AG04449 (cell line): ENCODE measurements at regions of chr10 and their contacts with region 1.

Region 1: GRCh38 chr10:21078410-21079329 is 181.6 kb upstream of the NEBL start:
- DNase-seq: no peak
- H3K4me3 ChIP-seq: no peak overlapping the region
- CTCF ChIP-seq: peak; percentile 69

Region 2: DNA sequence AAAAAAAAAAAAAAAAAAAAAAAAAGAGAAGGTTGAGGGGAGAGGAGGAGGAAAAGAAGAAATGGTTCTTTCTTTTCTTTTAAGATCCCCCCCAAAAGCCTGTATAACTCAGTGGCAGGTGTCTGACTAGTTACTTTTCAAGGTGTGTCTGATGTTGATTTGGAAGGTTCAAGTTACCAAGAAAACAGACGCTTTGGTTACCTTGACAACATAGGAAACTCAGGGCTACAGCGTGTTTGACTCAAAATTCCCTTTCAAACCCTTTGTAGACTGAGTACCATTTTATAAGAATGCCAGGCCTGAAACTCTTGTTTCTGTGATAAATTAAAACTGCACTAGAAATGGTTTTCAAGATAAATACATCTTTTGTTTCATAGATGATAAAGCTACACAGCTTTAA is 160.0 kb after region 1 on chr10:
- CTCF ChIA-PET with region 1: interaction called, 11 read pairs
- POLR2A ChIA-PET with region 1: no interaction called
- DNase-seq: no peak
- H3K4me3 ChIP-seq: no peak overlapping the region
- CTCF ChIP-seq: no peak

Region 3: DNA sequence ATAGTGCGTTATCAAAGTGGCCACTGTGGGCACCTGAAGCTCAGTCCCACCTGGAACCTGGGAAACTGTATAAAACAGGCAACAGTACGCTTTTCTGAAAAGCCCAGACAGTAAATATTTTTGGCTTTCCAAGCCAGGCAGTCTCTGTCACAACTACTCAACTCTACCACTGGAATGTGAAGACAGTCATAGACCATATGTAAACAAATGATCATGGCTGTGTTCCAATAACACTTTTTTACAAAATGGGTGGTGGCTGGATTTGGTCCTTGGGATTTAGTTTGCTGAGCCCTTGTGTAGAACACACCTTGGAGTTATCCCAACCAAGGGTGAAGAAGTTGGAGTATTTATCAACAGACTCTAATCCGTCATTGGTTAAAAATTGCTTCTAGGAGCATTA is 187.0 kb after region 1 on chr10:
- CTCF ChIA-PET with region 1: interaction called, 90 read pairs
- POLR2A ChIA-PET with region 1: no interaction called
- DNase-seq: no peak
- H3K4me3 ChIP-seq: no peak overlapping the region
- CTCF ChIP-seq: no peak